ENCODE measurements at regions of chr9 and their contacts with region 1.

Region 1: DNA sequence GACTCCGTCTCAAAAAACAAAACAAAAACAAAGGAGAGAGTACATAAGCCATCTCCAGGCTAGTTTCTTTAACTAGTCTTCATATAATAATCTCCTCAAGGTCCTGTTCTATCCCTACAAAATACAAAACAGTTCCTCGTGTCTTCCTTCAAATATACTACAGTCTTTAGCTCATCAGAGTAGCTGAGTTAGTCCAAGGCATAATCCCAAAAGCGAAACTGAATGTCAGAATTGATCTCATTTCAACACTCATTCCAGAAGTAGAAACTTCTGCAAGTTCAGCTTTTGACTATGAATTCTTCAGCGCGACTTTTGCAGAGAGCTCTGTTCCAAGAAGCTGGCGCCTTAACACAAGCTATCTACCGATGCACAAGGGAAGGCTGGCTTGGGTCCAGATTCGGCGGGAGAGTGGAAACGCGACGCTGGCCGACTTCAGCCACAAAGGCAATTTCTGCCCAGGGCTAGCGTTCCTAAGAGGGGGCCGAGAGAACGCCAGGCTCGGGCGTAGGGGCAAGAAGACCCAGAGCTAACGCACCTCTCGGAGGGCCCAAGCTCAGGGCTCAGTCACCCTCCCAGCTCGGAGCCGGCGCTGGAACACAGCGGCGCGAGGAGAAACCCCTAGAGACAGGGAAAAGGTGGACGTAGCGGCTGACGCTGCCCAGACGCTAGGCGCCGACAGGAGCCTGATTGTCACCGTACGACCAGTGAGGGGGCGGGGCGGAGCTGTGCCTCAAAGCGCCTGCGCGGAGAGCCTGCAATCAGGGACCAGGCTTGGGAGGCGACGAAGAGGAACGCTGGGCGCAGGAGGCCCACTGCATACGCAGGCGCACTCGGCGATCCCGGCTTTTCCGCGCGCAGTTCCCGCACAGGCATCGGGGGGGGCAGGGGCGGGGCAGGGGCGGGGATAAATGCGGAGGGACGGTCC is 469 bp upstream of the HSDL2 start:
- DNase-seq: peak; percentile 98 to 99 (median 98)
- ATAC-seq: peak; percentile 91
- H3K4me3 ChIP-seq: peak overlapping the region; percentile 80
- H3K27ac ChIP-seq: peak overlapping the region; percentile 93
- H3K4me1 ChIP-seq: peaks cover 14 to 25% of the 10 kb centered on the region in 2 experiments
- H3K27me3 ChIP-seq: no peaks in the 10 kb centered on the region
- CTCF ChIP-seq: peak in 2 of 3 experiments; percentile 17 to 18; a peak in 2 of 6 replicates
- EP300 ChIP-seq: no peak; the same call in none of the 2 replicates
- POLR2A ChIP-seq: peak; percentile 98
- RAD21 ChIP-seq: 0 out of 4 replicates have a peak, but pooled peaks of 1 of the 2 experiments have one; percentile 25

Region 2: GRCh38 chr9:112180387-112180881 is 199.0 kb before region 1 on chr9:
- CTCF ChIA-PET with region 1: no interaction called
- POLR2A ChIA-PET with region 1: no interaction called
- in situ Hi-C with region 1: no loop called
- intact Hi-C with region 1: loop called (anchors 5 kb)
- DNase-seq: peak; percentile 72 to 92 (median 80)
- ATAC-seq: peak; percentile 74
- H3K4me3 ChIP-seq: no peak overlapping the region
- H3K27ac ChIP-seq: peak overlapping the region; percentile 83
- H3K4me1 ChIP-seq: peaks cover 31 to 51% of the 10 kb centered on the region in 2 experiments
- H3K27me3 ChIP-seq: no peaks in the 10 kb centered on the region
- CTCF ChIP-seq: no peak
- EP300 ChIP-seq: peak; percentile 81
- POLR2A ChIP-seq: no peak
- RAD21 ChIP-seq: 0 out of 4 replicates have a peak, but pooled peaks of 1 of the 2 experiments have one; percentile 12

Region 3: DNA sequence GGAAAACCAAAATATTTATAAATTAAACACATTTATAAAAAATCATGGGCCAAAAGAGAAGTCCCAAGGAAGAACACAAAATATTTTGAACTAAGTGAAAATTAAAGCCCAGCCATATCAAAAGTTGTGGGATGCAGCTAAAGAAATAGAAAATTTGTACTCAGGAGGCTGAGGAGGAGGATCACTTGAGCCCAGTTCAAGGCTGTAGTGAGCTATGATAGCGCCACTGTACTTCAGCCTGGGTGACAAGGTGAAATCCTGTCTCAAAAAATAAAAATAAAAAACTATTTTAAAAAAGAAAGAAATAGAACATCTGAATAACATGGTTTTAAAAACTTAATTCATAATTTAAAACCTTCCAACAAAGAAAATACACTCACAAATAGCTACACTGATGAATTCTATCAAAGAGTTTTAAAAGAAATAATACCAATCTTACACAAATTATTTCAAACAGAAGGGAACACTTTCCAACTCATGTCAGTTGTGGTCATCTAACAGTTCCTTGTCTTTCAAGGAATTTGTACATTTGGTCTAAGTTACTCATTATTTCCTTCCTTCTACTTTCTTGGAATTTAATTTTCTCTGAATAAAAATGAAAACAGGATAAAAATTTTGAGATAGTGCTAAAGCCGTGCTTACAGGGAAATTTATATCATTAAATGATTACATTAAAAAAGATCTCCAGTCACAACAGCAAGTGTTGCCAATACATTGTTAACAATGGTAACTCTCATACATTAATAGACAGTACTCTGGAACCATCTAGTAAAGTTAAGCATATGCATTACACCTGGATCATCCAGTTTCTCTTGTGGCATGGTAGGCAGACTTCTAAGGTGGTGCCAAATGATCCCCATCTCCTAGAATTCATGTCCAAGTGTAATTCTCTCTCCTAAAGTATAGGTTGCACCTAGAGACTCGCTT is 63.8 kb before region 1 on chr9:
- CTCF ChIA-PET with region 1: no interaction called
- POLR2A ChIA-PET with region 1: interaction called, 3 read pairs
- in situ Hi-C with region 1: no loop called
- intact Hi-C with region 1: loop called (anchors 10 kb)
- DNase-seq: peak in 1 of 4 experiments; percentile 48
- ATAC-seq: peak; percentile 71
- H3K4me3 ChIP-seq: peak overlapping the region; percentile 44; the same call in 1 of the 2 replicates
- H3K27ac ChIP-seq: peak overlapping the region; percentile 66
- H3K4me1 ChIP-seq: peaks cover 24 to 38% of the 10 kb centered on the region in 2 experiments
- H3K27me3 ChIP-seq: no peaks in the 10 kb centered on the region
- CTCF ChIP-seq: no peak
- EP300 ChIP-seq: no peak
- POLR2A ChIP-seq: no peak
- RAD21 ChIP-seq: no peak

Region 4: GRCh38 chr9:112361601-112362000 is 17.8 kb before region 1 on chr9:
- CTCF ChIA-PET with region 1: no interaction called
- POLR2A ChIA-PET with region 1: interaction called, 10 read pairs
- in situ Hi-C with region 1: no loop called
- intact Hi-C with region 1: no loop called
- DNase-seq: peak in 2 of 4 experiments; percentile 18 to 59
- ATAC-seq: peak; percentile 80
- H3K4me3 ChIP-seq: no peak overlapping the region
- H3K27ac ChIP-seq: no peak overlapping the region
- H3K4me1 ChIP-seq: no peaks in the 10 kb centered on the region
- H3K27me3 ChIP-seq: no peaks in the 10 kb centered on the region
- CTCF ChIP-seq: peak; percentile 34 to 72 (median 36); a peak in 3 of 6 replicates
- EP300 ChIP-seq: no peak
- POLR2A ChIP-seq: no peak
- RAD21 ChIP-seq: peak; percentile 68 to 88

Region 5: DNA sequence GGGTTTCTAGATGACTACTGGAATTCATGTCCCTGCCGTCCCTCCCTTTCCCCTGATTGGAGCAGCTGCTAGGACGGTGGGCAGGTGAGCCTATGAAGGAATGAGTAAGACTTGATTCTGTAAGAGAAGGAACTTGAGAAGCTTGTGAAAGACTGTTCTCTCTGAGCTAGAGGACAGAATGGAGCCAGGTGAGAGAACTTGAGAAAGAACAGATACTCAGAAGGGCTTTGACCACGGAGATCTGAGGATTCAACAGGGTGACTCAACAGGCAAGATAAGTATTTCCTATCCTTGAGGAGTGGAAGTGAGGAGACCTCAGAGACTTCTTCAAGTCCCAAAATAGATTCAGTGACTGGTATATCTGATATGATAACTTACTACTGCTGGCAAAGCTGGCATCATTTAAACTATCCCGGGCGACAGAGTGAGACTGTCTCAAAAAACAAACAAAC is 42.4 kb after region 1 on chr9:
- CTCF ChIA-PET with region 1: no interaction called
- POLR2A ChIA-PET with region 1: interaction called, 5 read pairs
- in situ Hi-C with region 1: no loop called
- intact Hi-C with region 1: loop called (anchors 1 kb)
- DNase-seq: peak; percentile 34 to 79 (median 56)
- ATAC-seq: peak; percentile 82
- H3K4me3 ChIP-seq: no peak overlapping the region
- H3K27ac ChIP-seq: peak overlapping the region; percentile 14
- H3K4me1 ChIP-seq: peaks cover 15 to 28% of the 10 kb centered on the region in 2 experiments; a peak in 4 of 5 replicates
- H3K27me3 ChIP-seq: no peaks in the 10 kb centered on the region
- CTCF ChIP-seq: 0 out of 6 replicates have a peak, but pooled peaks of 1 of the 3 experiments have one; percentile 22
- EP300 ChIP-seq: peak; percentile 26; the same call in 1 of the 2 replicates
- POLR2A ChIP-seq: no peak
- RAD21 ChIP-seq: no peak

Region 6: DNA sequence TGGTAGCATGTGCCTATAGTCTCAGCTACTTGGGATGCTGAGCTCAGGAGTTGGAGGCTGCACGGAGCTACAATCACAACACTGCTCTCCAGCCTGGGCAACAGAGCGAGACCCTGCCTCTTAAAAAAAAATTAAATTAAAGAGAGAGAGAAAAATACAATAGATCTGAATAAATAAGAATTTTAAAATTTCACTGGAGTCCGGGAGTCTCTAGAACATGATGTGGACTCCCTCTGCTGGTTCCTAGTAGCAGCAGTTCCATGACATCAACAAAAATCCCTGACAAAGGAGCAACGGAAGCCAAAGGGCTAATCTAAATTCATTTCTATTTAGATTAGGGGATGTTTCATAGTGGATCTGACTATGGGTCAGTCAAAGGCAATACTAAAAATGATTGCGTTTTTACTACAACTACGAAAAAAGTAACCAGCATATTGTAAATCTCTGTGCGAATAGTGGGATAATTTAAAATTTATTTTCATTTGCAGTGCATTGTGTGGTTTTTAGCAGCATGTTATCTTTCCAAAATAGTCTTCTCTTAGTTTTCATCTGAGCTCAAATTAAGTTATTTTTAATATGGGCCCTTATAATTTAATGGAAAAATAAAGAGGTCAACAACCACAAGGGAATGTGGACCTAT is 331.7 kb after region 1 on chr9:
- CTCF ChIA-PET with region 1: no interaction called
- POLR2A ChIA-PET with region 1: interaction called, 3 read pairs
- in situ Hi-C with region 1: no loop called
- intact Hi-C with region 1: loop called (anchors 5 kb)
- DNase-seq: peak in 2 of 4 experiments; percentile 15 to 42
- ATAC-seq: peak; percentile 78
- H3K4me3 ChIP-seq: no peak overlapping the region
- H3K27ac ChIP-seq: no peak overlapping the region
- H3K4me1 ChIP-seq: no peaks in the 10 kb centered on the region
- H3K27me3 ChIP-seq: no peaks in the 10 kb centered on the region
- CTCF ChIP-seq: peak; percentile 36 to 58 (median 47); a peak in 5 of 6 replicates
- EP300 ChIP-seq: no peak
- POLR2A ChIP-seq: no peak
- RAD21 ChIP-seq: peak; percentile 37 to 43; a peak in 3 of 4 replicates

Region 7: GRCh38 chr9:112793213-112793810 is 413.9 kb after region 1 on chr9:
- CTCF ChIA-PET with region 1: no interaction called
- POLR2A ChIA-PET with region 1: no interaction called
- in situ Hi-C with region 1: no loop called
- intact Hi-C with region 1: loop called (anchors 10 kb)
- DNase-seq: peak; percentile 49 to 78 (median 58)
- ATAC-seq: peak; percentile 96
- H3K4me3 ChIP-seq: no peak overlapping the region
- H3K27ac ChIP-seq: no peak overlapping the region
- H3K4me1 ChIP-seq: no peaks in the 10 kb centered on the region; a peak in 2 of 5 replicates
- H3K27me3 ChIP-seq: peaks cover 0 to 5% of the 10 kb centered on the region in 2 experiments; a peak in 1 of 5 replicates
- CTCF ChIP-seq: peak; percentile 80 to 88 (median 83)
- EP300 ChIP-seq: no peak
- POLR2A ChIP-seq: no peak
- RAD21 ChIP-seq: peak; percentile 76 to 88